ENCODE measurements at regions of chr18 and their contacts with region 1.

Region 1: DNA sequence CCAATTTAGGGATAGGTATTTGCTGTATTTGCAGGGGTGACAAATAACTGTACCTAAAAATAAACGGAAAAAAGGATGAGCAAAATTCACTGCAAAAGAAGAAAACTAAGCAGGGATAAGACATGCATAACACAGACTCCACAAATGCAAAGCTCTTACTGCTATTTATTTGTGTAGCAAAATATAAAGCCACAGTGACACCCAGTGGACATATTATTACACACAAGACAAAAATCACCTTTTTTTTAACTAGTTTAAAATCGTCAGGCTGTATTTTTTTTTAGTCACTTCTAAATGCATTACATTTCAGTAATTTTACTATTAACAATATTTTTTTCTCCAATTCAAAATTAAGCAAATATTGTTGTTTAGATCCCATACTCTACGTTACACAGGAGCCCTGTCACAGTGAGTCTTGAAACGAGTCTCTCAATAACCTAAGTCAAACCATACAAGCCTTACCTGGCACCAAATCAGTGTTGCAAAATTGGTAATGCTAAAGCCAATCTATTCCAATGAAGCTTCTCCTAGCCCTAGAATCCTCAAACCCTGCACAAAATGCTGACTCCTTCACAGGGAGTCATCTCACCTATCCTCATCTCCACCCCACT is 23.7 kb downstream of the METTL4 start:
- DNase-seq: no peak
- H3K4me3 ChIP-seq: no peak overlapping the region
- H3K27ac ChIP-seq: no peak overlapping the region
- H3K4me1 ChIP-seq: no peaks in the 10 kb centered on the region
- H3K27me3 ChIP-seq: no peaks in the 10 kb centered on the region
- CTCF ChIP-seq: peak; percentile 65

Region 2: GRCh38 chr18:877238-877637 is 1670.3 kb before region 1 on chr18:
- intact Hi-C with region 1: loop called (anchors 10 kb)
- DNase-seq: no peak
- H3K4me3 ChIP-seq: no peak overlapping the region
- H3K27ac ChIP-seq: no peak overlapping the region
- H3K4me1 ChIP-seq: no peaks in the 10 kb centered on the region
- H3K27me3 ChIP-seq: peaks cover 21% of the 10 kb centered on the region
- CTCF ChIP-seq: no peak

Region 3: DNA sequence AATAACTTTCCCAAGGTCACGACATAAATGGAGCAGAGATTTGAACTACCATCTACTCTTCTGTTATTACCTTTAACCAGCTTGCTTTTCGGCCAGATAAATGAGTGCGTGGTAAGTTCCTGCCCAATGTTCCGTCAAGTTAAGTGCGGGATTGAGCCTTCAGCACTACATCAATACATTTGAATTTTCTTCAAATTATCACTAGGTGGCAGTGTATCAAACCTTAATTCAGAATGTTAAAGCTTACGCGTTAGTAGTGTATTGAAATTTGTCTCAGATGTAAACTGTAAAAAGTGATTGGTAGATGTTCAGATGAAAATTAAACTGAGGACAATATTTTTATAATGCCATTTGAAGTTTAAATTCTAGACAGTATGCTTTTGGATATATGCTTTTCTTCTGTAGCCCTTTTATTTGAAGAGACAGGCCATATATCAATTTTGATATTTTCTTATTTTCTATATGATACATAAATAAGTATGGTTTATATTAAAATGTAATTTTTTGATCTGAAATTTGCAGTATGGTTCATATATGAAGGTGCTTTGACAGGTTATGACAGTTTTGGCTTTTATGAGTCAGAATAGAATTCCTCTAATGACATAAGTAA is 961.6 kb before region 1 on chr18:
- intact Hi-C with region 1: loop called (anchors 10 kb)
- DNase-seq: no peak
- H3K4me3 ChIP-seq: no peak overlapping the region
- H3K27ac ChIP-seq: no peak overlapping the region
- H3K4me1 ChIP-seq: no peaks in the 10 kb centered on the region
- H3K27me3 ChIP-seq: peaks cover 26% of the 10 kb centered on the region
- CTCF ChIP-seq: peak; percentile 64

Region 4: DNA sequence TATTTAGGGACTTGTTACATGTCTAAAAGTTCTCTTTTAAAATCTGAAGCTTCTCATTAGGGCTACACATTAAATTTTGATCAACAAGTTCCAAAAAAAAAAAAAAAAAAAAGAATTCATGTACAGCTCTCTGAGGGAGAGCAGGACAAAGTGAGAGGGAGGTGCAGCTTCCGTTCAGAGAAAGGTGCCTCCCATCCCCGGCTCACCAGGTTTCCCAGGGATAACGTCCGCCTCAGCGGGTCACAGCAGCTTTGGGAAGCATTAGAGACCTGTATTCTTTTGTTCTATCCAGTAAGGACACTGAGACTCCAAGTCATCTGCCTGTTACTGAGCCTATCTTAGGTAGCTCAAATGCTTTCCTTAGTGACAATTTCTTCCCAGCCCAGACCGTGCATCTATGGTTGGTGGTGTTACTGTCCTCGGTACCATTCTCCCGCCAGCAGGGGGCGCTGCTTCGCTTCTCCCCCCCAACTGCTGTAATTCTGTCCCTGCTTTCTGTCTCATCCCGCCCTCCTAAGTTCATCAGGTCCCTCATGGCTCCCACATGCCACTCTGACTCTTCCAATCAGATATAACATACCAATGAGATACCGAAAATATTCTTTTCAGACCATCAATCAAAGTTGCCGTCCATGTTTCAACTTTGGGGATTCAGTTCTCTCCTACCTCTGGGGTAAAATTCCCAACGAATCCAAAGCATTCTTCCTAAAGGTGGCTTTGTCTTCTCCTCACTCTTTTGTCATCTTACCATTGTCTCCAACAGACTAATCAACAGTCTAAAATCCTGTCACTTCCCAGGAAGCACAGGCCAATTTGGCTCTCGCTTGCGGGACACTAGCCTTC is 442.7 kb before region 1 on chr18:
- intact Hi-C with region 1: loop called (anchors 10 kb)
- DNase-seq: peak; percentile 38
- H3K4me3 ChIP-seq: no peak overlapping the region
- H3K27ac ChIP-seq: no peak overlapping the region
- H3K4me1 ChIP-seq: no peaks in the 10 kb centered on the region
- H3K27me3 ChIP-seq: peaks cover 3% of the 10 kb centered on the region
- CTCF ChIP-seq: peak; percentile 79

Region 5: GRCh38 chr18:2337552-2338141 is 209.9 kb before region 1 on chr18:
- intact Hi-C with region 1: loop called (anchors 10 kb)
- DNase-seq: no peak
- H3K4me3 ChIP-seq: no peak overlapping the region
- H3K27ac ChIP-seq: no peak overlapping the region
- H3K4me1 ChIP-seq: no peaks in the 10 kb centered on the region
- H3K27me3 ChIP-seq: no peaks in the 10 kb centered on the region
- CTCF ChIP-seq: peak; percentile 60

Region 6: GRCh38 chr18:2351121-2351850 is 196.3 kb before region 1 on chr18:
- intact Hi-C with region 1: no loop called
- DNase-seq: no peak
- H3K4me3 ChIP-seq: no peak overlapping the region
- H3K27ac ChIP-seq: no peak overlapping the region
- H3K4me1 ChIP-seq: no peaks in the 10 kb centered on the region
- H3K27me3 ChIP-seq: peaks cover 8% of the 10 kb centered on the region
- CTCF ChIP-seq: no peak

Measured in left ventricle myocardium inferior (tissue), 1 donor.